CD14-positive monocyte (primary cell): ENCODE measurements at regions of chr1 and their contacts with region 1.

Region 1: DNA sequence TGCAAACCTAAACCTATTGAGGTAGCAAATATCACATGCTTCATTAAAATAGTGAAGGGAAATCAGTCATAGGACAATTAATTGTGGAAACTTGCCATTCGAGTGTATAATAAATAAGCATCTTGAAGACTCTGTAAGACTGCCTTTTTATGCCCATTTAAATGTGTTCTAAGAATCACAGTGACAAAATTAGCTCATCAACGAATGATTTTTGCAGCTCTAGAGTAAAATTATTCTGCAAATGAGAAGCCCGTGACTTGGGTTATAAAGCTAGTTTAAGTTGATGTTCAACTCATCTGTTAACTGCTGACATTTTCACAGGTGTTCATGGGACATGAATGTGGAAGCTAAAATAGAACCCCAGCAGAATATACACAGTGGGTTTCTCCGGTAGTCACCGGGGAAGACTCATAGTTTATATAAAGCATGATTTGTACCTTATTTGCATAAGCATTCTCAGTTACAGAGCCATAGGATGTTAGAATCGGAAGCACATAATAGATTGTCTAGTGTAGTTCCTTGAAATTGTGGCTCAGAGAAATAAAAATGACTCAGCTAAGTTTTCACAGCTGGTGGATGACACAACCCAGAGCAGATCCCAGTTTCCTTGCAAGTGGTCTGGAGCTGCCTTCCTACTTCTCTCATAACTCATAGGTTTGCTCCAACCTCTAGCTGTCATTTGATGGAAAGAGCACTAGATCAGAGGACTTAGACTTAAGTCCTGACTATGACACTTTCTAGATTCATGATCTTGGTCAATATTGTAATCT is 107.3 kb downstream of the UCHL5 start:
- DNase-seq: peak; percentile 78 to 93 (median 88)
- H3K4me3 ChIP-seq: peak overlapping the region in 1 of 3 experiments; percentile 10
- H3K4me3 Mint-ChIP-seq: no peak overlapping the region
- H3K27ac ChIP-seq: peak overlapping the region in 1 of 2 donors; percentile 67
- H3K27ac Mint-ChIP-seq: peak overlapping the region; percentile 86 to 94 (median 90)
- H3K4me1 ChIP-seq: peaks cover 21 to 33% of the 10 kb centered on the region in 2 donors
- H3K4me1 Mint-ChIP-seq: peaks cover 30% of the 10 kb centered on the region
- H3K27me3 ChIP-seq: no peaks in the 10 kb centered on the region
- H3K27me3 Mint-ChIP-seq: no peaks in the 10 kb centered on the region
- CTCF ChIP-seq: no peak

Region 2: DNA sequence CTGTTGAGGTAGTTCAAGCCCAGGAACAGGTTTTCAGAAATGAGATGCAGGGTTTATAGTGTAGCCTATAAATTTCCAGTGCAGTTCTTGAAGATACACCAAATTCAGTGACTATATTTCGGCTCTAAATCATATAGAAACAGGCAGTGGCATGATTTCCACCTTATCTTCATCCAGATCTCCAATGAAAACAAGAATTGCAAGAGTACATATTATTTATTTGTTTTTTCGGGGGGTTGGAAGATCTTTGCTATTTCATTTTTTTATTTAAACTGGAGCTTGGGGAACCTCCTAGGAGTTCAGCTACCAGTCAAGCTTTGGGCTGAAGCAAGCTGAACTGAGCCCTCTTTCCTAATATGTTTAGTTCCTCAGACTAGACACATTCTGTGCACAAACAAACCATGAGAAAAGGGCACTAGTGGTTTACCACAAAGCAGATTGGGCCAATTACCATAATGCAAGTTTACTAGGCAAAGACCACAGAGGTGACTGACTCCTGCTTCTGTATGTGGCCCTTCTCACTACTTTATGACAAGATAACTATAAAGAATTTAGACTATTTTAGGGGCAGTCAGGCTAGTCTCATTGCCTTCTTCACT is 74.5 kb before region 1 on chr1:
- intact Hi-C with region 1: loop called in 1 of 2 experiments (anchors 10 kb)
- DNase-seq: peak; percentile 60 to 84 (median 70)
- H3K4me3 ChIP-seq: peak overlapping the region in 1 of 3 experiments; percentile 49
- H3K4me3 Mint-ChIP-seq: peak overlapping the region in 1 of 2 donors; percentile 69
- H3K27ac ChIP-seq: peak overlapping the region in 1 of 2 donors; percentile 64
- H3K27ac Mint-ChIP-seq: peak overlapping the region; percentile 63 to 89 (median 75)
- H3K4me1 ChIP-seq: peaks cover 77 to 84% of the 10 kb centered on the region in 2 donors
- H3K4me1 Mint-ChIP-seq: peaks cover 80% of the 10 kb centered on the region
- H3K27me3 ChIP-seq: no peaks in the 10 kb centered on the region
- H3K27me3 Mint-ChIP-seq: peaks cover 0 to 2% (median 0%) of the 10 kb centered on the region in 3 donors
- CTCF ChIP-seq: no peak

Region 3: GRCh38 chr1:193019442-193020026 is 67.7 kb after region 1 on chr1:
- intact Hi-C with region 1: loop called in 1 of 2 experiments (anchors 5 kb)
- DNase-seq: peak; percentile 50 to 85 (median 63)
- H3K4me3 ChIP-seq: no peak overlapping the region
- H3K4me3 Mint-ChIP-seq: no peak overlapping the region
- H3K27ac ChIP-seq: peak overlapping the region in 1 of 2 donors; percentile 48
- H3K27ac Mint-ChIP-seq: peak overlapping the region in 4 of 7 donors; percentile 37 to 64 (median 44)
- H3K4me1 ChIP-seq: peaks cover 3 to 6% of the 10 kb centered on the region in 2 donors
- H3K4me1 Mint-ChIP-seq: peaks cover 4% of the 10 kb centered on the region
- H3K27me3 ChIP-seq: no peaks in the 10 kb centered on the region
- H3K27me3 Mint-ChIP-seq: no peaks in the 10 kb centered on the region
- CTCF ChIP-seq: peak; percentile 71

Region 4: GRCh38 chr1:193059268-193060225 is 107.7 kb after region 1 on chr1 and contains the starts of genes RO60 and UCHL5:
- intact Hi-C with region 1: no loop called
- DNase-seq: peak; percentile 92 to 94 (median 94)
- H3K4me3 ChIP-seq: peak within 1 kb of the TSS; percentile 71 to 85 (median 83)
- H3K4me3 Mint-ChIP-seq: peak within 1 kb of the TSS; percentile 95 to 97
- H3K27ac ChIP-seq: peak within 1 kb of the TSS; percentile 93 to 94
- H3K27ac Mint-ChIP-seq: peak within 1 kb of the TSS; percentile 98 to 99 (median 99)
- H3K4me1 ChIP-seq: peaks cover 19 to 33% of the 10 kb centered on the region in 2 donors
- H3K4me1 Mint-ChIP-seq: peaks cover 48% of the 10 kb centered on the region
- H3K27me3 ChIP-seq: no peaks in the 10 kb centered on the region
- H3K27me3 Mint-ChIP-seq: peaks cover 0 to 4% (median 0%) of the 10 kb centered on the region in 3 donors
- CTCF ChIP-seq: no peak
- polyA plus RNA-seq, gene RO60: 13.2 to 67.9 (median 58.1) TPM
- polyA plus RNA-seq, gene UCHL5: 8.6 to 43.0 (median 29.6) TPM